T-cell (primary cell): ENCODE measurements at regions of chr18 and their contacts with region 1.

Region 1: GRCh38 chr18:9136315-9137155 is at the start of gene ANKRD12:
- DNase-seq: peak; percentile 91 to 99 (median 96)
- ATAC-seq: peak; percentile 74 to 78 (median 77)
- H3K4me3 ChIP-seq: peak within 1 kb of the TSS; percentile 81 to 94
- H3K4me3 Mint-ChIP-seq: peak within 1 kb of the TSS; percentile 93 to 98 (median 96)
- H3K27ac ChIP-seq: peak within 1 kb of the TSS; percentile 95
- H3K27ac Mint-ChIP-seq: peak within 1 kb of the TSS; percentile 99
- H3K4me1 ChIP-seq: peaks cover 19 to 28% of the 10 kb centered on the region in 2 experiments
- H3K4me1 Mint-ChIP-seq: peaks cover 69 to 72% (median 72%) of the 10 kb centered on the region in 3 donors
- H3K27me3 ChIP-seq: no peaks in the 10 kb centered on the region
- H3K27me3 Mint-ChIP-seq: no peaks in the 10 kb centered on the region
- total RNA-seq, gene ANKRD12: 183 to 211 (median 199) TPM

Region 2: GRCh38 chr18:7237673-7238272 is 1898.8 kb before region 1 on chr18:
- CTCF ChIA-PET with region 1: no interaction called
- POLR2A ChIA-PET with region 1: no interaction called
- DNase-seq: no peak
- ATAC-seq: no peak
- H3K4me3 ChIP-seq: no peak overlapping the region
- H3K4me3 Mint-ChIP-seq: no peak overlapping the region
- H3K27ac ChIP-seq: no peak overlapping the region
- H3K27ac Mint-ChIP-seq: no peak overlapping the region
- H3K4me1 ChIP-seq: no peaks in the 10 kb centered on the region
- H3K4me1 Mint-ChIP-seq: no peaks in the 10 kb centered on the region
- H3K27me3 ChIP-seq: no peaks in the 10 kb centered on the region
- H3K27me3 Mint-ChIP-seq: no peaks in the 10 kb centered on the region

Region 3: GRCh38 chr18:9069601-9070000 is 66.9 kb before region 1 on chr18:
- CTCF ChIA-PET with region 1: interaction called in 1 of 2 experiments, 13 read pairs
- POLR2A ChIA-PET with region 1: no interaction called
- DNase-seq: no peak
- ATAC-seq: no peak
- H3K4me3 ChIP-seq: no peak overlapping the region
- H3K4me3 Mint-ChIP-seq: no peak overlapping the region
- H3K27ac ChIP-seq: no peak overlapping the region
- H3K27ac Mint-ChIP-seq: no peak overlapping the region
- H3K4me1 ChIP-seq: peaks cover 3 to 5% of the 10 kb centered on the region in 2 experiments
- H3K4me1 Mint-ChIP-seq: peaks cover 6 to 23% (median 8%) of the 10 kb centered on the region in 3 donors
- H3K27me3 ChIP-seq: no peaks in the 10 kb centered on the region
- H3K27me3 Mint-ChIP-seq: no peaks in the 10 kb centered on the region

Region 4: GRCh38 chr18:9082711-9083510 is 53.6 kb before region 1 on chr18:
- CTCF ChIA-PET with region 1: interaction called in 1 of 2 experiments, 10 read pairs
- POLR2A ChIA-PET with region 1: interaction called, 5 to 6 read pairs
- DNase-seq: peak in 10 of 35 experiments; percentile 3 to 59 (median 16)
- ATAC-seq: peak; percentile 74 to 86 (median 74)
- H3K4me3 ChIP-seq: peak overlapping the region in 1 of 2 donors; percentile 2
- H3K4me3 Mint-ChIP-seq: peak overlapping the region; percentile 34 to 64 (median 64)
- H3K27ac ChIP-seq: peak overlapping the region; percentile 88
- H3K27ac Mint-ChIP-seq: peak overlapping the region; percentile 94 to 98
- H3K4me1 ChIP-seq: peaks cover 14 to 25% of the 10 kb centered on the region in 2 experiments
- H3K4me1 Mint-ChIP-seq: peaks cover 25 to 52% (median 44%) of the 10 kb centered on the region in 3 donors
- H3K27me3 ChIP-seq: no peaks in the 10 kb centered on the region
- H3K27me3 Mint-ChIP-seq: no peaks in the 10 kb centered on the region

Region 5: GRCh38 chr18:9102508-9103375 is 33.8 kb before region 1 on chr18 and contains the start of gene NDUFV2:
- CTCF ChIA-PET with region 1: interaction called in 1 of 2 experiments, 31 read pairs
- POLR2A ChIA-PET with region 1: interaction called, 5 to 12 read pairs
- DNase-seq: peak; percentile 93 to 99 (median 97)
- ATAC-seq: peak; percentile 86 to 96 (median 89)
- H3K4me3 ChIP-seq: peak within 1 kb of the TSS; percentile 76 to 91
- H3K4me3 Mint-ChIP-seq: peak within 1 kb of the TSS; percentile 91 to 92 (median 91)
- H3K27ac ChIP-seq: peak within 1 kb of the TSS; percentile 80
- H3K27ac Mint-ChIP-seq: peak within 1 kb of the TSS; percentile 93 to 95
- H3K4me1 ChIP-seq: peaks cover 21 to 36% of the 10 kb centered on the region in 2 experiments
- H3K4me1 Mint-ChIP-seq: peaks cover 55 to 65% (median 60%) of the 10 kb centered on the region in 3 donors
- H3K27me3 ChIP-seq: no peaks in the 10 kb centered on the region
- H3K27me3 Mint-ChIP-seq: no peaks in the 10 kb centered on the region
- total RNA-seq, gene NDUFV2: 148 to 201 (median 156) TPM

Region 6: DNA sequence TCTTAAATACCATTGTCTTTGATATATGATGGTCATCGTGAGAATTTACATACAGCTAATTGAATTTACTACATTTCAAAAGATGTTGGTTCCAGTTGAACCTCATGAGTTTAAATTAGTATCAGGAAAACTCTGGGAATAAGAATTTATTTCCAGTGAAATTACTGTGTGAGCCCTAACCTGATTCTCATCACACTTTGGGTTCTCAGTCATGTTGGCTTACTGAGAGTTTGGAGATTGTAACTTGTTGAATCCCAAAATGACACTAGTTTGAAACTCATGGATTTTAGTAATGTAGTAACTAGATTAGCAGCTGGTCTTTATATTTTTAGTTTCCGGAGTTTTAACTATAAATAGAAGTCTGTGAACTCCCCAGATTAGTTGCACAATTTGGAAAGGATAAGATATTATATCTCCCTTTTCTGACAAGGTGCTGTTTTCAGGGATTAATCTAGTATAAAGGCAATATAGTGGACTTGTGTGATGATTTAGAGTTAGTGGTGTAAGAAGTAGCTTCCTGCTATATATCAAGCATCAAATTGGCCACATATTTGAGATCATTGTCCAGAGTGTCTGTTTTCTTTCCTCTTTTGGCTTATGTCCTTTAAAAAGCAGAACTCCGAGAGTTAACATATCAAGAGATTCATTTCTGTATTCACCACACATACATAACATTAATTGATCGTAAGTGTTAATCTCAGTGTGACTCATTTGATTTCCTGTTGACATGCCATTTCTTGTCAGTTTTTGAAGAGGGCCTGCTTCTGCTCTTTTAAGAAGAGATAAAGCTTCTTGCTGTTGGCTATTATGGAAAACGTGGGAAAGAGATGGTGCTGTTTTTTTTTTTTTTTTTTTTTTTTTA is 18.3 kb before region 1 on chr18:
- CTCF ChIA-PET with region 1: interaction called, 4 read pairs
- POLR2A ChIA-PET with region 1: interaction called, 3 to 13 read pairs
- DNase-seq: peak in 1 of 35 experiments; percentile 73
- ATAC-seq: peak; percentile 50 to 57 (median 54)
- H3K4me3 ChIP-seq: no peak overlapping the region
- H3K4me3 Mint-ChIP-seq: peak overlapping the region; percentile 67 to 91 (median 90)
- H3K27ac ChIP-seq: peak overlapping the region; percentile 95
- H3K27ac Mint-ChIP-seq: peak overlapping the region; percentile 99 to 100
- H3K4me1 ChIP-seq: peaks cover 28 to 36% of the 10 kb centered on the region in 2 experiments
- H3K4me1 Mint-ChIP-seq: peaks cover 77 to 90% (median 82%) of the 10 kb centered on the region in 3 donors
- H3K27me3 ChIP-seq: no peaks in the 10 kb centered on the region
- H3K27me3 Mint-ChIP-seq: no peaks in the 10 kb centered on the region

Region 7: GRCh38 chr18:9549405-9549804 is 412.9 kb after region 1 on chr18:
- CTCF ChIA-PET with region 1: no interaction called
- POLR2A ChIA-PET with region 1: no interaction called
- DNase-seq: no peak
- ATAC-seq: no peak
- H3K4me3 ChIP-seq: no peak overlapping the region
- H3K4me3 Mint-ChIP-seq: no peak overlapping the region
- H3K27ac ChIP-seq: no peak overlapping the region
- H3K27ac Mint-ChIP-seq: no peak overlapping the region
- H3K4me1 ChIP-seq: no peaks in the 10 kb centered on the region
- H3K4me1 Mint-ChIP-seq: no peaks in the 10 kb centered on the region
- H3K27me3 ChIP-seq: no peaks in the 10 kb centered on the region
- H3K27me3 Mint-ChIP-seq: no peaks in the 10 kb centered on the region